Activated T-helper 2 cell treated with anti-CD3 and anti-CD28 coated beads, Interferon-gamma antibody, Interleukin-2, Interleukin-4, amounts not matched to agents 10 μg/mL and 5 μg/mL and 100 μg/mL, durations not matched to agents 14 hours and 24 hours and 36 hours (primary cell): ENCODE measurements at regions of chr3 and their contacts with region 1.

Region 1: DNA sequence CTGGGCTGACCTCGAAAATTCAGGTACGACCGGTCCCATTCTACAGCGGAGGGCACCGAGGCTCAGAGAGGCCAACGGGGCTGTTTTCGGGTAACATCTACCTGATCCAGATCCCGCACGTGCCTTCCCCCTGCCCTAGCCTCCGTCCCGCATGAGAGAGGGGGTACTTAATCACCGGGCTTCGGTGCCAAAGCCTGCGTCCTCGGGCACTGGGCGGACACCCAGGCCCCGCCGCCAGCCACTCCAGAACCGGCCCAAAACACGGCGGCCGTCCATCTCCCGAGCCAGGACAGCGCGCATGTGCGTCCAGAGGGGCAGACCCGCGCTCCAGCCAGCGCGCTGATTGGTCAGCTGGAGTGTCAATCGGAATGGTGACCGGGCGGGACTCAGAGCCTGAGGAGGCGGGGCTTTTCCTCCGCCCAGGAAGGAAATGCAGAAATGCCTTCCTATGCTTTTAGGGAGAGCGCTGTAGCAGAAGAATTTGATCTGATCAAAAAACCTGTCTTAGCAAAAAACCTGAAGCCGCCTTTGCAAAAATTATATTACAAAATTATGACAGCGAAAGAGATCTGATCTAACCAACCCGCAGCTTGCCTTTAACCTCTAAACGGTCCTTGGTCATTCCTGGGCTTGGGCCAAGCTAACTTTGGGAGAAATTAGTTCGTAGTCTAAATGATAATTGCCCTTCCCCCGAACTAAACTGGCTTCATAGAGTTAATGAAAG is at the start of gene RPUSD3:
- DNase-seq: peak; percentile 94
- H3K4me3 Mint-ChIP-seq: peak within 1 kb of the TSS; percentile 98
- H3K27ac Mint-ChIP-seq: peak within 1 kb of the TSS; percentile 94
- H3K4me1 Mint-ChIP-seq: peaks cover 16% of the 10 kb centered on the region
- H3K27me3 Mint-ChIP-seq: no peaks in the 10 kb centered on the region
- total RNA-seq, gene RPUSD3: 70.0 and 71.1 TPM in 2 replicates

Region 2: DNA sequence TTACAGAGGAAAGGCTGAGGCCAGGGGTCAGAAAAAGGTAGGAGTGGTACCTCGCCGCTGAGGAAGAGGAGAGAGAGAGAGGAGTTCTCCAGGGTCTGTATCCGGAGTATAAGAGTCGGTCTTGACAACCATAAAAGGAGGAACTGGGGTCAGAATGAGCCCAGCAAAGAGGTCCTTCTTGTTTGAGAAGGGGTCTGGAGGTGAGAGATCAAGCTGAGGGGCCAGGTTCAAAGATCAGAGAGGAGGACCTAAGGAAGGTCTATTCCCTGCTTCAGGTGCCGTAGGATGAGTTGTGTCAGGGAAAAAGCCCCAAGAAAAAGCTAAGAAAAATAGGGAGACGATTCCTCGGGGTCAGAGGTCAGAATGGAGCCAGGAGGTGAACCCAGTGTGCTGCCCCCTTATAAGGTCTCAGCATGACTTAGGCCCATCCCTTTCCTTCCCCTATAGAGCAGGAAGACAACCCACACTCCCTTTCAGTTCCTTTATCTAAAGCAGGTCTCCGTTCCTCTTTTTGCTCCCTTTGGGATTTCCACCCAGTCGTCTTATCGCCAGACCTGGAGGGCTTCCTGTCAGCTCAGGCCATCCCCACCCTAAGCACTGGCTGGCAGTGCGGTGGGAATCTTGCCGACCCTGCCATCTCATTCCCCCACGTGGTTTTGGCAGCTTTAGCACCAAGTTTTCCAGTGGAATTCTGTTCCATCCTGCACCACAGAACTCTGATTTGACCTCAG is 193.9 kb before region 1 on chr3:
- intact Hi-C with region 1: loop called (anchors 1 kb)
- DNase-seq: no peak
- H3K4me3 Mint-ChIP-seq: peak overlapping the region; percentile 93
- H3K27ac Mint-ChIP-seq: peak overlapping the region; percentile 84
- H3K4me1 Mint-ChIP-seq: peaks cover 11% of the 10 kb centered on the region
- H3K27me3 Mint-ChIP-seq: no peaks in the 10 kb centered on the region

Region 3: GRCh38 chr3:9902372-9903237 is 58.7 kb after region 1 on chr3 and contains the start of gene IL17RE:
- intact Hi-C with region 1: no loop called
- DNase-seq: no peak
- H3K4me3 Mint-ChIP-seq: peak within 1 kb of the TSS; percentile 18
- H3K27ac Mint-ChIP-seq: peak within 1 kb of the TSS; percentile 67
- H3K4me1 Mint-ChIP-seq: peaks cover 25% of the 10 kb centered on the region
- H3K27me3 Mint-ChIP-seq: no peaks in the 10 kb centered on the region
- total RNA-seq, gene IL17RE: 0.78 and 1.0 TPM in 2 replicates

Region 4: GRCh38 chr3:9951962-9952805 is 108.3 kb after region 1 on chr3 and contains the start of gene PRRT3:
- intact Hi-C with region 1: loop called (anchors 5 kb)
- DNase-seq: peak; percentile 43
- H3K4me3 Mint-ChIP-seq: peak within 1 kb of the TSS; percentile 87
- H3K27ac Mint-ChIP-seq: peak within 1 kb of the TSS; percentile 49
- H3K4me1 Mint-ChIP-seq: peaks cover 12% of the 10 kb centered on the region
- H3K27me3 Mint-ChIP-seq: no peaks in the 10 kb centered on the region
- total RNA-seq, gene PRRT3: 10.7 and 11.3 TPM in 2 replicates

Region 5: DNA sequence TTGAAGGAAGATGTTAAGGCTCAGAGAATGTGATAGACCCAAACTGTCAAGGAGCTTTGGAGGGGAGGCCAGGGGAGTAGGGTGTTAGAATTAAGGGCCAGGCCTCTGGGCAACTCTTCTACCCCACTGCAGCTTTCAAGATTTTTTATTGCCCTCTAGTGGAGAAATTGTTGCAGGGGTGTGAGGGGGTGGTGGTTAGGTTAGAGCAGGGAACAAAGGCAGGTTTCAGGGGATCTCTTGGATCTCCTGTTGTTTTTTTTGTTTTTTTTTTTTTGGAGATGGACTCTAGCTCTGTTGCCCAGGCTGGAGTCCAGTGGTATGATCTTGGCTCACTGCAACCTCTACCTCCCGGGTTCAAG is 478.5 kb after region 1 on chr3:
- intact Hi-C with region 1: loop called (anchors 1 kb)
- DNase-seq: no peak
- H3K4me3 Mint-ChIP-seq: no peak overlapping the region
- H3K27ac Mint-ChIP-seq: no peak overlapping the region
- H3K4me1 Mint-ChIP-seq: peaks cover 14% of the 10 kb centered on the region
- H3K27me3 Mint-ChIP-seq: peaks cover 15% of the 10 kb centered on the region